Heart left ventricle (tissue), 16 donors: ENCODE measurements at regions of chr19 and their contacts with region 1.

Region 1: GRCh38 chr19:46904114-46905060 is 43.6 kb downstream of the ARHGAP35 start:
- DNase-seq: peak in 4 of 5 donors; percentile 45 to 75 (median 59)
- ATAC-seq: peak in 3 of 4 donors; percentile 65 to 71 (median 66)
- H3K4me3 ChIP-seq: no peak overlapping the region
- H3K27ac ChIP-seq: peak overlapping the region in 11 of 12 donors; percentile 31 to 66 (median 48)
- H3K4me1 ChIP-seq: peaks cover 9 to 81% (median 53%) of the 10 kb centered on the region in 12 donors
- H3K27me3 ChIP-seq: no peaks in the 10 kb centered on the region
- CTCF ChIP-seq: no peak
- POLR2A ChIP-seq: no peak

Region 2: DNA sequence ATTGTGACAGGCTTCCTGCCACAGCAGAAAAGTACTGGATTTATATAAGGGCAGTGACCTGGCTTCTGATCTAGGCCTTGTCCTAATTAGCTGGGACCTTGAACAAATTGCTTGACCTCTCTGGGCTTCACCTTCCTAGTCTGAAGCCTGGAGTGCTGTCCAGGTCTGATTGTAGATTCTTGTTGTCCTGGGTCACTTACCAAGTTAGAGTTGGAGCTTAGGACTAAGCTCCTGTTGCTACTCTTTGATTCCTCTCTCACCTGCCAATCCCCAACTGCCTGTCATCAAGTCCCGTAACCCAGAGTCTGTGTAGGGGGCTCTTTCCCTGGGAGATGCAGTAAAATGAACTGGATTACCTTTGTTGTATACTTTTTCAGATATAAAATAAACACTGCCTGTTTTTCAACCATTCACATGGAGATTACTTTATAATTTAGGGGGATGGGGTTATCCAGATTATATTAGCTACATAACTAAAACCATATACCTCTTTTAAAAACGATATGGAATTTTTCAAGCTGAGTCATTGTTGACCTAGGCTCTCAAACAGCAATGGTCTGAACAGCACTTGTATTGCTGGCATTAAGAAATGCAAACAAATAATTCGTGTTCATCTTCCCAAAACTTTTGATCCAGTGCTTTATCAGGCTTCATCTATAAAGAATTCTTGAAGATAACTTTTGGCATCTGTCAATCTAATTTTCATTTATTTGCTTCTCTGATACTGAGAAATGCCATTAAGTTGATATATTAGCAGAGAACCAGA is 37.8 kb before region 1 on chr19:
- intact Hi-C with region 1: loop called in 4 of 10 experiments (anchors 5 kb)
- DNase-seq: no peak
- ATAC-seq: no peak
- H3K4me3 ChIP-seq: no peak overlapping the region
- H3K27ac ChIP-seq: peak overlapping the region in 9 of 12 donors; percentile 18 to 62 (median 25)
- H3K4me1 ChIP-seq: peaks cover 5 to 78% (median 50%) of the 10 kb centered on the region in 12 donors
- H3K27me3 ChIP-seq: no peaks in the 10 kb centered on the region
- CTCF ChIP-seq: no peak
- POLR2A ChIP-seq: no peak